Mammary epithelial cell (primary cell): ENCODE measurements at regions of chr11 and their contacts with region 1.

Region 1: GRCh38 chr11:75867775-75868374 is 52.9 kb downstream of the UVRAG start:
- DNase-seq: peak; percentile 11
- H3K4me3 ChIP-seq: no peak overlapping the region
- H3K27ac ChIP-seq: no peak overlapping the region
- H3K4me1 ChIP-seq: no peaks in the 10 kb centered on the region
- H3K27me3 ChIP-seq: no peaks in the 10 kb centered on the region
- CTCF ChIP-seq: peak; percentile 67 to 72

Region 2: DNA sequence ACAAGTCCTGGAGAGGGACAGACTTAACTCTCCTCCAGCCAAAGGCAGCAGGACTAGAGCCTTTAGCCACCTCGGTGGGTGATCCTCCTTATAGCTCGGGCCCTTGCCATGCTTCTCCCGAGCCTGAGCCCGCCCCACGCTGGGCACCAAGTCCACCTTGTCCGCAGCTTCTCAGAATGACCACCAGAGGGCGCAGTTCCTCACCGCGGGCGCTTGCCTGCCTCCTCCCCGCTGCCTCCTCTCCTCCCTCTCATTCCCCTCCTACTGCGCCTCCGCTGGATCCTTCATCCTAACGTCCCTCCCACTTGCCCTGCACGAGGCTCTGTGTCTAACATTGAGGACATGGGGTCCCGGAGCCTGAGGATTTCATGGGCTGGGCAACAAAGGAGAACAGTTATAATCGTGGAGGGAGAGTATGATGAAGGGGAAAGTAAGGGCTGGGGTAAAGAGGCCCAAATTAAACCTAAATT is 161.6 kb before region 1 on chr11:
- CTCF ChIA-PET with region 1: no interaction called
- dilution Hi-C with region 1: no loop called
- in situ Hi-C with region 1: loop called in 1 of 2 experiments (anchors 25 kb)
- intact Hi-C with region 1: loop called (anchors 2 kb)
- DNase-seq: peak; percentile 55
- H3K4me3 ChIP-seq: no peak overlapping the region
- H3K27ac ChIP-seq: no peak overlapping the region
- H3K4me1 ChIP-seq: no peaks in the 10 kb centered on the region
- H3K27me3 ChIP-seq: no peaks in the 10 kb centered on the region
- CTCF ChIP-seq: peak; percentile 81 to 92

Region 3: GRCh38 chr11:75718419-75719339 is 149.2 kb before region 1 on chr11:
- CTCF ChIA-PET with region 1: no interaction called
- dilution Hi-C with region 1: no loop called
- in situ Hi-C with region 1: loop called in 1 of 2 experiments (anchors 25 kb)
- intact Hi-C with region 1: loop called (anchors 2 kb)
- DNase-seq: no peak
- H3K4me3 ChIP-seq: no peak overlapping the region
- H3K27ac ChIP-seq: no peak overlapping the region
- H3K4me1 ChIP-seq: peaks cover 4% of the 10 kb centered on the region
- H3K27me3 ChIP-seq: no peaks in the 10 kb centered on the region
- CTCF ChIP-seq: no peak

Region 4: GRCh38 chr11:75814686-75815344 is 53.1 kb before region 1 on chr11 and contains the start of gene UVRAG:
- CTCF ChIA-PET with region 1: no interaction called
- dilution Hi-C with region 1: no loop called
- in situ Hi-C with region 1: loop called in 1 of 2 experiments (anchors 10 kb)
- intact Hi-C with region 1: no loop called
- DNase-seq: peak; percentile 100
- H3K4me3 ChIP-seq: peak within 1 kb of the TSS; percentile 81 to 86 (median 82)
- H3K27ac ChIP-seq: peak within 1 kb of the TSS; percentile 87
- H3K4me1 ChIP-seq: peaks cover 27% of the 10 kb centered on the region
- H3K27me3 ChIP-seq: no peaks in the 10 kb centered on the region
- CTCF ChIP-seq: peak in 1 of 2 donors; percentile 22
- total RNA-seq, gene UVRAG: 17.5 to 20.4 TPM